MCF 10A (cell line): ENCODE measurements at regions of chr4 and their contacts with region 1.

Region 1: DNA sequence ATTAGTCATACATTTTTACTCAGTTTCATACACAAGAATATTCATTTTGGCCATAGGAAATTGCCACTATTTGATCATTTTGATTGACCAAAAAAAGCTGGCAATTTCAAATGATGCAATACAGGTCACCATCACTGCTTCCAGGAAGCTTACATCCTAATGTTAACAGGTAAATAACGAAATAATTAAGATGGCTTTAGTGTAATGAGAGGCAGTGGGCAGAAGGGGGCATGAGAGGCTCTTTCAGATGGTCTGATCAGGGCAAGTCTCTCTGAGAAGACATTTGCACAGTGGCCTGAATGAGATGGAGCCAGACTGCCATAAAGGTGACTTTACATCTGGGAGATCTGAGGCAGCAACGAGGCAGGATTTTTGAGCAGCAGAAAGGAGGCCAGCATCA is 170.7 kb downstream of the SLIT2 start:
- DNase-seq: peak; percentile 66
- H3K4me3 Mint-ChIP-seq: no peak overlapping the region
- H3K27ac Mint-ChIP-seq: no peak overlapping the region
- H3K4me1 Mint-ChIP-seq: peaks cover 6% of the 10 kb centered on the region
- H3K27me3 Mint-ChIP-seq: no peaks in the 10 kb centered on the region
- CTCF ChIP-seq: peak; percentile 61

Region 2: GRCh38 chr4:18689308-18690115 is 1732.9 kb before region 1 on chr4:
- CTCF ChIA-PET with region 1: no interaction called
- POLR2A ChIA-PET with region 1: no interaction called
- intact Hi-C with region 1: loop called (anchors 5 kb)
- DNase-seq: peak; percentile 73
- H3K4me3 Mint-ChIP-seq: no peak overlapping the region
- H3K27ac Mint-ChIP-seq: no peak overlapping the region
- H3K4me1 Mint-ChIP-seq: peaks cover 10% of the 10 kb centered on the region
- H3K27me3 Mint-ChIP-seq: no peaks in the 10 kb centered on the region
- CTCF ChIP-seq: peak; percentile 80

Region 3: GRCh38 chr4:19224820-19225219 is 1197.6 kb before region 1 on chr4:
- CTCF ChIA-PET with region 1: no interaction called
- POLR2A ChIA-PET with region 1: no interaction called
- intact Hi-C with region 1: loop called (anchors 2 kb)
- DNase-seq: peak; percentile 27
- H3K4me3 Mint-ChIP-seq: no peak overlapping the region
- H3K27ac Mint-ChIP-seq: no peak overlapping the region
- H3K4me1 Mint-ChIP-seq: peaks cover 7% of the 10 kb centered on the region
- H3K27me3 Mint-ChIP-seq: no peaks in the 10 kb centered on the region
- CTCF ChIP-seq: peak; percentile 26

Region 4: GRCh38 chr4:19309378-19309777 is 1113.0 kb before region 1 on chr4:
- CTCF ChIA-PET with region 1: no interaction called
- POLR2A ChIA-PET with region 1: no interaction called
- intact Hi-C with region 1: loop called (anchors 5 kb)
- DNase-seq: peak; percentile 44
- H3K4me3 Mint-ChIP-seq: no peak overlapping the region
- H3K27ac Mint-ChIP-seq: no peak overlapping the region
- H3K4me1 Mint-ChIP-seq: peaks cover 8% of the 10 kb centered on the region
- H3K27me3 Mint-ChIP-seq: no peaks in the 10 kb centered on the region
- CTCF ChIP-seq: peak; percentile 58

Region 5: GRCh38 chr4:20544645-20545044 is 122.2 kb after region 1 on chr4:
- CTCF ChIA-PET with region 1: interaction called, 21 read pairs
- POLR2A ChIA-PET with region 1: interaction called, 3 read pairs
- intact Hi-C with region 1: loop called (anchors 1 kb)
- DNase-seq: peak; percentile 56
- H3K4me3 Mint-ChIP-seq: no peak overlapping the region
- H3K27ac Mint-ChIP-seq: no peak overlapping the region
- H3K4me1 Mint-ChIP-seq: no peaks in the 10 kb centered on the region
- H3K27me3 Mint-ChIP-seq: no peaks in the 10 kb centered on the region
- CTCF ChIP-seq: peak; percentile 52

Region 6: GRCh38 chr4:20700007-20700761 is 277.8 kb after region 1 on chr4 and contains the start of gene PACRGL:
- CTCF ChIA-PET with region 1: interaction called, 13 read pairs
- POLR2A ChIA-PET with region 1: no interaction called
- intact Hi-C with region 1: no loop called
- DNase-seq: peak; percentile 94
- H3K4me3 Mint-ChIP-seq: peak within 1 kb of the TSS; percentile 93
- H3K27ac Mint-ChIP-seq: peak within 1 kb of the TSS; percentile 96
- H3K4me1 Mint-ChIP-seq: peaks cover 17% of the 10 kb centered on the region
- H3K27me3 Mint-ChIP-seq: no peaks in the 10 kb centered on the region
- CTCF ChIP-seq: no peak
- total RNA-seq, gene PACRGL: 23.7 and 28.3 TPM in 2 replicates